Spleen (tissue), 13 donors: ENCODE measurements at regions of chr9 and their contacts with region 1.

Region 1: DNA sequence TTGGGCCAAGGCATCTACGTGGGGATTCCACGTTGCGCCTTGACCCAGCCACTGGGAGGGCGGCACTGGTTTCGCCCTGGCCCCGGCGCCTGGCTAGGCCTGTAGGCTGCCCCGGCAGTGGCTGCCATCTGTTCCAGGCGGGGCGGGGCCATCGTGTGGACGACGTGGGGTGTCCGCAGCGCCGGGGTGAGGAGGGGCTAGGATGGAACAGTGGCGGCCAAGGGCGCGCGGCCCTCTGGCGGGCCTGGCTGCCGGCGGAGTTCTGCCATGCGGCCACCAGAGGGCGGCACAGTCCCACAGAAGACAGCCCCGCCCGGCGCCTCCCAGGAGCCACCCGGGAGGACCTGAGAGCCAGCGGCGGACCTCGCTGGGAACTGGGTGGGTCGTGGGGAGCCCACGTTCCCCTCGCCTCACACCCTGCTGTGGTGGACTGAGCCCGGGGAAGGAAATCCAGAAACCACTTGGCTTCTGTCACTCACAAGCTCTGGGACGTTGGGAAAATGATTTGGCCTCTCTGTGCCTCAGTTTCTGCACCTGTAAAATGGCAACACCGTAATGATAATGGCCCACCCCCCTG is 22.6 kb upstream of the RAPGEF1 start:
- DNase-seq: peak; percentile 94
- H3K4me3 ChIP-seq: peak overlapping the region in 1 of 8 donors; percentile 31
- H3K27ac ChIP-seq: no peak overlapping the region
- H3K4me1 ChIP-seq: peaks cover 0 to 9% (median 8%) of the 10 kb centered on the region in 6 donors
- H3K27me3 ChIP-seq: peaks cover 0 to 54% (median 0%) of the 10 kb centered on the region in 7 donors
- CTCF ChIP-seq: peak; percentile 78 to 98 (median 96)
- POLR2A ChIP-seq: no peak

Region 2: GRCh38 chr9:131618071-131618479 is 144.4 kb before region 1 on chr9:
- intact Hi-C with region 1: no loop called
- DNase-seq: no peak
- H3K4me3 ChIP-seq: no peak overlapping the region
- H3K27ac ChIP-seq: peak overlapping the region in 2 of 8 donors; percentile 14 to 89
- H3K4me1 ChIP-seq: peaks cover 0 to 45% (median 24%) of the 10 kb centered on the region in 6 donors
- H3K27me3 ChIP-seq: no peaks in the 10 kb centered on the region
- CTCF ChIP-seq: no peak
- POLR2A ChIP-seq: no peak

Region 3: DNA sequence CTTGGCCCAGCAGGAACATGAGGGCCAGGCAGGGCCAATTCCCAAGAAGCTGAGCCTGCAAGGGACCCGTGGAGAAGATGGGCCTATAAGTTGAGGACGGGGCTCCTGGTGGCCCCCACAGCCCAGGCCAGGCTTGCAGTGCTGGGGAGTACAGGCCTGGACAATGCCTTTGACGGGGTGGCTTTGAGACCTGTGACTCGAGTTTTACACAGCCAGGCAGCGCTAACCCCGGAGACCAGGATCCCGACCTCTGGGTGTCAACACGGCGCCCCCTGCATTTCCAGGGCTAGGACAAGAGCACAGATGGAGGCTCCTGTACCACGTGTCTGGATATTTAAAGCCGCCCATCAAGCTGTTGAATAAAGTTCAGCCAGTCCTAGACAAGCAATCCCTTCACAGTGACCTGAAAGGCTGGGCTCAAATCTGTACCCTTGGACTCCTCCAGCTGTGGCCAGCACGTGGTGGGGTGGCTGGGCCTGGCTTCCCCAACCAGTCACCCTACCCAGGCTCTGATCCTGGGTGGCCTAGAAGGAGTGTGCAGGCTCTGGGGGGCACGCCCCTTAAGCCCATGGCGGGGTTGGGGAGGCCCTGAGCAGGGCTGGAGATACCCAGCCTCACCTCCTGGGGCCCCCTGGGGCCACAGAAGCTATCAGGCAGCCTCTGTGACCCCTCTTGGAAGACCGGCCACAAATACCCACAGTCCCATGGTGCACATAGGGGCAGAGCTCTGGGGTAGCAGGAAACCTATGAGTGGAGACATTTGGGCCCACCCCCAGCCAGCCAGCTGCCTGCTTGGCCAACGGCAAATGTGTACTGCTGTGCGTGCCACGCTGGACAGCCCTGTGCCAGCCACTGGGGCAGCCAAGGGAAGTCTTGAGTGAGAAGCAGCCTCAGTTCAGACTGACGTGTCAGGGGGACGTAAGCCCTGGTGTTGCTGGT is 488.1 kb after region 1 on chr9:
- intact Hi-C with region 1: loop called (anchors 5 kb)
- DNase-seq: no peak
- H3K4me3 ChIP-seq: no peak overlapping the region
- H3K27ac ChIP-seq: no peak overlapping the region
- H3K4me1 ChIP-seq: peaks cover 0 to 6% (median 0%) of the 10 kb centered on the region in 6 donors
- H3K27me3 ChIP-seq: peaks cover 0 to 93% (median 15%) of the 10 kb centered on the region in 7 donors
- CTCF ChIP-seq: no peak
- POLR2A ChIP-seq: no peak